Sciatic nerve (tissue), 2 donors: ENCODE measurements at regions of chr9 and their contacts with region 1.

Region 1: DNA sequence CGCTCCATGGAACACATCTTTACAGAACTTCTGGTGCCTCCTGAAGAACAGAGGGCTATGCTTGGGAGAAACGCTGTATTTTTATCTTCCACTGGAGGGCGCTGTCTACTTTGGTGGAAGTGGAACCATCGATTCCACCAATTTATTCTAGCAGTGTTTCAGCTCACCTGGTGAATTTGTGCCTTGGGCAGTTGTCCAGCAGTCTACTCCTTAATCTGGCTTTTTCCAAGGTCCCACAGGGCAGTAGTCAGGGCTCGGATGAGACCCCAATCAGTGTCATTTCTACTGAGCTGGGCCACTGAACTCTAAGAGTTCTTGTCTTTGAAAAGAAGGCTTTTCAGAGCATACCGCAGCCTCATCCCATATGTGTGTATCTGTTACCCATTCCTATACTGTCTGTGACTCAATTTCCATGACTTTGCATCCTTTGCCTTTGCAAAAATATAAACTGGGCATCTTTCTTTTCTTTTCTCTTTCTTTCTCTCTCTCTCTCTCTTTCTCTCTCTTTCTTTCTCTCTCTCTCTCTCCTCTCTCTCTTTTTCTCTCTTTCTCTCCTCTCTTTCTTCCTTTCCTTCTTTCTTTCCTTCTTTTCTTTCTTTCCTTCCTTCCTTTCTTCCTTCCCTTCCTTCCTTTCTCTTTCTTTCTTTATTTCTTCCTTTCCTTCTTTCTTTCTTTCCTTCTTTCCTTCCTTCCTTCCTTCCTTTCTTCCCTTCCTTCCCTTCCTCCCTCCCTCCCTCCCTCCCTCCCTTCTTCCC is 138.4 kb upstream of the ZNF618 start:
- DNase-seq: no peak
- ATAC-seq: peak; percentile 49

Region 2: DNA sequence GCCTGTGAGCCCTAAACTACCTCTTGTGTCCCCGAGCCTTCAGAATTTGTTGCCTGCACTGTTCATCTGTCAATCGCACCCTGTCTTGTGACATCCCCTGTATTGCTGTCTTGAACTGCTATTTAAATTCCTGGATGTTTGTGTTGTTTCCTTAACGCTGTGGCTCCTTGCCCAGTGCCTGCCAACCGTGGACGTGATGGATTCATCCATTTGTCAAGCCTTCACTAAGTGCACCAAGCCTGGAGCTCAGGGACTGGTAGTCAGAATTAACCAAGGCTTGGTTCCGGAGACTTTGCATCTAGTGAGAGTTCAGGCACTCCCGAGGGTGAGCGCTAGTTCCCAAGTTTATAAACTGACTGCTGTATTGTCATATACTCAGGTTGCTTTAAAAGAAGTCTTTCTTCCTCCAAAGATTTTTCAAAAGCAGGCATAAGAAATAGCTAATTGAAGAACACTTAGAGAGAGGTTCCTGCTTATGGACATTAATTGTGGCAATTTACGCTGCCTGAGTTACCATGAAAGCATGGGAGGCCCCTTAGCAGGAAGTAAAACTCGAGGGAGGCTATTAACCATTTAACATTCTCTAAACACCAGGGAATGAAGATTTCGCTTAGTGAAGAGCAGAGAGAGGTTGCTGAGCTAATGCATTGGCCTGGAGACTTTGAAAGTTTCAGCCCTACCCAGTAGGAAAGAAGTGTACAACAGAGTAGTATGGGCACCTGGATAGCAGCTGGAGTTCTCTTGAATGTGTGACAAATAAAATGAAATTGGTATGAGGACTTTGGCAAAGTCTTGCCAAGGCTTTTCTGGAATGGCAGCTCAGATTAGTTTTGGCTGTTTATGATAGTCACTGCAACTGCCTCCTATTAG is 245.1 kb before region 1 on chr9:
- intact Hi-C with region 1: no loop called
- DNase-seq: no peak
- ATAC-seq: no peak

Region 3: GRCh38 chr9:114033397-114034103 is 295.9 kb after region 1 on chr9:
- intact Hi-C with region 1: loop called (anchors 10 kb)
- DNase-seq: no peak
- ATAC-seq: peak; percentile 66